ENCODE measurements at regions of chr15 and their contacts with region 1.

Region 1: GRCh38 chr15:67542420-67543347 is at the start of gene MAP2K5:
- DNase-seq: no peak
- H3K4me3 ChIP-seq: peak within 1 kb of the TSS; percentile 72
- CTCF ChIP-seq: no peak

Region 2: DNA sequence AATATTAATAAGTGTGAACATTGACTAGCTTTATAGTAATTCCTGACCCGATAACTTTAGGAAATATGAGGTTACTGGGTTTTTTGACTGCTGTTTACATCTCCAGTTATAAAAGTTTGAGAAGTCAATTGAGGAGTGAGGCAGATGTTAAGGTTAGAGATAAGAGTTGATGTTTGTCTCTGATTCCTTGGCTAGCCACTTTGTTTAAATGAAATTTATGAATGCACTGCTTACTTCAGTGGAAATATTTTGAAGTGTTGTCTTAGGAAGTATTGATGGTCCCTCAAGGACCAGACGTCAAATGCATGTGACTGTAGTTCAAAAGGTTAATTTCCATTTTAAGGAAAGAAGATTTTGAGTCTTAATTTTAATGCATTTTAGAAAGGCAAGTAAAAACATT is 41.5 kb after region 1 on chr15:
- in situ Hi-C with region 1: loop called (anchors 5 kb)
- DNase-seq: no peak
- H3K4me3 ChIP-seq: no peak overlapping the region
- CTCF ChIP-seq: no peak